ENCODE measurements at regions of chr13 and their contacts with region 1.

Region 1: GRCh38 chr13:113083402-113084061 is 22.1 kb upstream of the F7 start:
- DNase-seq: no peak
- H3K4me3 ChIP-seq: no peak overlapping the region
- H3K27ac ChIP-seq: no peak overlapping the region
- H3K4me1 ChIP-seq: no peaks in the 10 kb centered on the region
- H3K27me3 ChIP-seq: no peaks in the 10 kb centered on the region
- CTCF ChIP-seq: no peak

Region 2: DNA sequence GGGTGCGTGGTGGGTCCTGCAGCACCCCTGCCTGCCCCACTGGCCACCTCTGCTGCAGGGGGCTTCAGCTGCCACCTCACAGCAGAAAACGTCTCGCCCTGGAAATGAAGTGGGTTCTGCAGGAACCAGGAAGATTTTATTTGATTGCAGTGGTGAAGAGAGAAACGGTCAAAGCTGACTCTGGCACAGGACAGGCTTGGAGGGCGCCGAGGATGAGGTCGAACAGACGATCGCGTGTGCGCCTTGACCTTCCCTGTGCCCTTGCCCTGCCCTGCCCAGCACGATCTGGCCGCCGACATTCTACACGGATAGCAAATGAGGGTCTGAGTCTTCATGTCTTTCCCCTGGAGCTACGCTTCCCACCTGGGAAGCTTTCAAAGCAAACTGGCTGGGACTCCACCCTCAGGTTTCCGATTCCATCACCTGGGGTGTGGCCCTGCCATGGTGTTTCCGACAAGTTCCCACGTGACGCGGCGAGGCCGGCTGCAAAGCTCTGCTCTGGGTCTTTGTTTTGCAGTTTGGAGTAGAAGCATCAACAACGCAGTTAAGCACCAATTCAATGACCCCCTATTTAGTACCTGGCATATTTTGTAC is 445.3 kb before region 1 on chr13:
- CTCF ChIA-PET with region 1: no interaction called
- dilution Hi-C with region 1: no loop called
- in situ Hi-C with region 1: no loop called
- intact Hi-C with region 1: no loop called
- DNase-seq: no peak
- H3K4me3 ChIP-seq: no peak overlapping the region
- H3K27ac ChIP-seq: no peak overlapping the region
- H3K4me1 ChIP-seq: peaks cover 8% of the 10 kb centered on the region
- H3K27me3 ChIP-seq: peaks cover 21% of the 10 kb centered on the region
- CTCF ChIP-seq: no peak

Region 3: GRCh38 chr13:112983428-112984196 is 99.9 kb before region 1 on chr13:
- CTCF ChIA-PET with region 1: no interaction called
- dilution Hi-C with region 1: loop called (anchors 5 kb)
- in situ Hi-C with region 1: no loop called
- intact Hi-C with region 1: no loop called
- DNase-seq: no peak
- H3K4me3 ChIP-seq: no peak overlapping the region
- H3K27ac ChIP-seq: no peak overlapping the region
- H3K4me1 ChIP-seq: no peaks in the 10 kb centered on the region
- H3K27me3 ChIP-seq: peaks cover 2% of the 10 kb centered on the region
- CTCF ChIP-seq: no peak

Region 4: GRCh38 chr13:113022391-113023216 is 60.9 kb before region 1 on chr13:
- CTCF ChIA-PET with region 1: no interaction called
- dilution Hi-C with region 1: loop called (anchors 5 kb)
- in situ Hi-C with region 1: no loop called
- intact Hi-C with region 1: no loop called
- DNase-seq: no peak
- H3K4me3 ChIP-seq: no peak overlapping the region
- H3K27ac ChIP-seq: no peak overlapping the region
- H3K4me1 ChIP-seq: peaks cover 11% of the 10 kb centered on the region
- H3K27me3 ChIP-seq: no peaks in the 10 kb centered on the region
- CTCF ChIP-seq: no peak

Region 5: GRCh38 chr13:113129921-113130750 is 46.6 kb after region 1 on chr13:
- CTCF ChIA-PET with region 1: no interaction called
- dilution Hi-C with region 1: loop called (anchors 5 kb)
- in situ Hi-C with region 1: no loop called
- intact Hi-C with region 1: no loop called
- DNase-seq: no peak
- H3K4me3 ChIP-seq: peak overlapping the region in 1 of 3 experiments; percentile 4
- H3K27ac ChIP-seq: no peak overlapping the region
- H3K4me1 ChIP-seq: peaks cover 3% of the 10 kb centered on the region
- H3K27me3 ChIP-seq: no peaks in the 10 kb centered on the region
- CTCF ChIP-seq: no peak

Region 6: DNA sequence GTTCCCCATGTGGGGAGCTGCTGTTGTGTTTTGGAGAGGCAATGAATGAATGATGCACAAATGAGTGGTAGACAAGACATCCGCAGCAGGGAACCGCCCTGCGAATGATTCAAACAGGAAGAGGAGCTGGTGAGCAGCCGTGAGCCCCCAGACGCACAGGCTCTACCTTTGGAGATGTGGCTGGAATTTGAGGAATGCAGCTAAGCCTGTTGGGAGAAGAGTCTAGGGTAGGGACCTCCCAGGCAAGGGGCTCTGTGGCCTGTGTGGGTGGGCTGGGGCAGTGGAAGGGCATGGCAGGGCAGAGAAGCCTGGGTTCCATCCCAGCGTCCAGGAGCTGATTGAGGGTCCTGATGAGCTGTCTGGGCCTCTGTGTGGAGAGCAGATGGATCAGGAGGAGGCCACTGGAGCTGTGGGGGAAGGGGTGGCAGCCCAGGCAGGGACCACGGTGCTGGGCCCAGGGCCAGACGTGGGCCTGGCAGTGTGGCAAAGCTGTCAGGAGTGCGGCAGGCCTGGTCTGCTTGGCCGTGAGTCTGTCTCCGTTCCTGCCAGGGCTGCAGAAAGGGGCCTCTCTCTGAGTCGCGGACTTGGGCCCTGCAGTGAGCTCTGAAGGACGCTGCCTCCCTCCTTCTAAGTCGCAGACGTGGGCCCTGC is 448.7 kb after region 1 on chr13:
- CTCF ChIA-PET with region 1: no interaction called
- dilution Hi-C with region 1: no loop called
- in situ Hi-C with region 1: no loop called
- intact Hi-C with region 1: no loop called
- DNase-seq: peak; percentile 24
- H3K4me3 ChIP-seq: no peak overlapping the region
- H3K27ac ChIP-seq: no peak overlapping the region
- H3K4me1 ChIP-seq: peaks cover 15% of the 10 kb centered on the region
- H3K27me3 ChIP-seq: no peaks in the 10 kb centered on the region
- CTCF ChIP-seq: no peak